ENCODE measurements at regions of chr11 and their contacts with region 1.

Region 1: GRCh38 chr11:134139873-134140331 is 71.0 kb downstream of the JAM3 start:
- DNase-seq: peak; percentile 74
- ATAC-seq: peak; percentile 91

Region 2: GRCh38 chr11:133927690-133928627 is 211.9 kb before region 1 on chr11:
- intact Hi-C with region 1: loop called (anchors 10 kb)
- DNase-seq: peak; percentile 76
- ATAC-seq: peak; percentile 79

Measured in sciatic nerve (tissue), 2 donors.